HEK293 (cell line): ENCODE measurements at regions of chr1 and their contacts with region 1.

Region 1: DNA sequence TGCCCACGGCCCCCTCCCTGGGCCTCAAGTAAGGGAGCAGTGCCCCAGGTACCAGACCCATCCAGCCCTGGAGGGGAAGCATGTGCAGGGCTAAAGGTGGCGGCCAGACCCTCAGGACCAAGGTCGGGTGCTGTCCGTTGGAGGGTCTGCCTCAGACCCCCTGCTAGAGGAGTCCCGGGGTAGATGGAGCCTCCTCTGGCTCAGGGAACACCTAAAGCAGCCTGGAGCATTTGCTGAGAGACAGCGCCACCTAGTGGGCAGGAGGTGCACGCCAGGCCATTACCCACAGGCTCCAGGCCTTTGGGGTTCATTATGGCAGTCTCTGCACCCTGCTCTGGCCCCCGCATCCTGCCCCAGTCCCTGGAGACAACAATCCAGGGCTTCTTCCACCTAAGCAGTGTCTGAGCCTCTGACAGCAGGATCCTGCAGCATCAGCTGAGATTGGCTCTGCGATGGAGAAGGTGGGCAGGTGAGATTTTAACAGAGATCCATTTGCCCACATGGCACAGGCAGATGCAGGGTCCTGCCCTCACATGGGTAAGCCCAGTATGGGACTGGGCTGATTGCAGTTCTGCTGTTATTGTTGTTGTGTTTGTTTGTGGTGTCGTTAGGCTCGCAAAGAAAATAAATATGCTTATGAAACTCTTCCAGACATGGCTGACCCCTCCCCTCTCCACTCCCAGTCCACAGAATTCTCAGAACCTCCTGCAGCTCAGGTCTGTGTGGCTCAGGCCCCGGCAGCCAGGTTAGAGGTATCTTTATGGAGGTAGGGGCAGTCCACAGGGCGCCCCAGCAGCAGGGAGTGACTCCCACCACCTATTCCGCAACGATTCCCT is 42.4 kb downstream of the CTNNBIP1 start:
- H3K4me3 ChIP-seq: no peak overlapping the region
- H3K27ac ChIP-seq: no peak overlapping the region
- H3K4me1 ChIP-seq: no peaks in the 10 kb centered on the region
- CTCF ChIP-seq: peak; percentile 94

Region 2: DNA sequence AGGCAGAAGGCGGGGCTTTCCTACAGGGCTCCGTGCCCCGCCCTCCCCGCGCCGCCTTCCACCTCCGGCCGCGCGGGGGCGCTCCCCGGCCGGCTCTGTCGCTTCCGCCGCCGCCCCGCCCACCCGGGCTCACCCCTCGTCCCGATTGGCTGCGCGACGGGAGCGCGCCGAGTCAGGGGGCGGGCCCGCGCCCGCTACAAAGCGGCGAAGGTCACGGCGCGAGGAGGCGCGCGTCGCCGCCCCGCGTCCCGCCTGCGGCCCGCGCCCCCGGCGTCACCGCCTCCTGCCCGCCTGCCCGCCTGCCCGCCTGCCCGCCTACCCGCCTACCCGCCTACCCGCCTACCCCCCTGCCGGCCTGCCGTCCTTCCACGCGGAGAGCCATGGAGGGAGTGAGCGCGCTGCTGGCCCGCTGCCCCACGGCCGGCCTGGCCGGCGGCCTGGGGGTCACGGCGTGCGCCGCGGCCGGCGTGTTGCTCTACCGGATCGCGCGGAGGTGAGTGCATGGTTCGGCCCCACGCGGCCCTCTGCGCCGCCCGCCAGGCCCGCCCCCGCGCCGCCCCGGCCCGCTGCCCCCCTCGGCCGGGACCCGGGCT is 279.0 kb before region 1 on chr1 and contains the start of gene TMEM201:
- CTCF ChIA-PET with region 1: no interaction called
- POLR2A ChIA-PET with region 1: no interaction called
- H3K4me3 ChIP-seq: peak within 1 kb of the TSS; percentile 40
- H3K27ac ChIP-seq: peak within 1 kb of the TSS; percentile 71; the same call in 1 of the 2 replicates
- H3K4me1 ChIP-seq: peaks cover 12% of the 10 kb centered on the region
- CTCF ChIP-seq: no peak

Region 3: GRCh38 chr1:9626201-9626608 is 241.4 kb before region 1 on chr1:
- CTCF ChIA-PET with region 1: interaction called, 24 read pairs
- POLR2A ChIA-PET with region 1: interaction called, 3 read pairs
- H3K4me3 ChIP-seq: no peak overlapping the region
- H3K27ac ChIP-seq: no peak overlapping the region
- H3K4me1 ChIP-seq: no peaks in the 10 kb centered on the region
- CTCF ChIP-seq: no peak

Region 4: GRCh38 chr1:9724706-9725476 is 142.7 kb before region 1 on chr1:
- CTCF ChIA-PET with region 1: interaction called, 13 read pairs
- POLR2A ChIA-PET with region 1: no interaction called
- H3K4me3 ChIP-seq: no peak overlapping the region
- H3K27ac ChIP-seq: no peak overlapping the region
- H3K4me1 ChIP-seq: no peaks in the 10 kb centered on the region
- CTCF ChIP-seq: peak; percentile 59

Region 5: GRCh38 chr1:9784508-9785133 is 83.0 kb before region 1 on chr1:
- CTCF ChIA-PET with region 1: interaction called, 135 read pairs
- POLR2A ChIA-PET with region 1: interaction called, 4 read pairs
- H3K4me3 ChIP-seq: no peak overlapping the region
- H3K27ac ChIP-seq: no peak overlapping the region
- H3K4me1 ChIP-seq: 0 out of 2 replicates have a peak, but pooled peaks cover 3% of the 10 kb centered on the region
- CTCF ChIP-seq: peak; percentile 40

Region 6: DNA sequence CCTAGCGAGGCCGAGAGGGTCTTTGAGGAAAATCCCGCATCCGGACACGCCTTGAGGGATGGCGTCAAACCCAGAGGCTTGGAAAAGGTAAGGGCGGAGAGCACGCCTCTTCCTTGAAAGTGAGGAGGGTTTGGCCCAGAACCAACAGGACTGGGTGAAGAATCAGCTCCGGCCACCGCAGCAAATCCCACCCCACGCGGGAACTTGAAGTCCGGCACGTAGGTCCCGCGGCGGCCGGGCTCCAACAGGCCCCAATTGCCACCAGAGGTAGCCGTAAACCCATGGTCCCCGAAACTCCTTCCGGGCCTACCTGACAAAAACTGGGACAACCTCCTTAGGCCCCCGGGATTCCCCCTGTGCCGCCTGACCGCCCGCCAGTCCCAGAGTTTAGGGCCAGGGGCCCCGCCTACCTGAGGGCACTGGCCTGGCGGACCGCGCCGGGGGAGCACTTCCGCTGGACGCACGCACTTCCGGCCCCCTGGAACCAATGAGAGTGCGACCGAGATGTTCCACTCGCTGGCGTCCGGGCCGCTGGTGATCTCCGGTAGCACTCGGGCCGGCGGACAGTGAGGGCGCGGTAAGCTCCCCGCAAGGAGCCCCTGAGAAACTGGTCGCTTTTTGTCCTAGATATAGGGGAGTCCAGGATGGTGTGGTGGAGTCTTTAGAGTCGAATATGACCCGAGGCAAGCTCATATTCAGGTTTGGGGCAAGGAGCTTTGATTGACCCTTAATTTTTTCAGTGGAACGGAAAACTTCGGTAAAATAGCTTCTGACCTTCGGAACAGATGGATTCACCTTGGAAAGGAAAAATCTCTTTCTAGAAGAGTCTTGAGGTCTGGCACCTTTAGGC is 75.5 kb after region 1 on chr1 and contains the starts of genes LZIC and NMNAT1:
- CTCF ChIA-PET with region 1: interaction called, 10 read pairs
- POLR2A ChIA-PET with region 1: interaction called, 3 read pairs
- H3K4me3 ChIP-seq: peak within 1 kb of the TSS; percentile 89
- H3K27ac ChIP-seq: peak within 1 kb of the TSS; percentile 69
- H3K4me1 ChIP-seq: no peaks in the 10 kb centered on the region
- CTCF ChIP-seq: peak; percentile 13; the same call in 1 of the 2 replicates